Activated CD4-positive, alpha-beta memory T cell treated with anti-CD3 and anti-CD28 coated beads for 36 hours (primary cell): ENCODE measurements at regions of chr2 and their contacts with region 1.

Region 1: DNA sequence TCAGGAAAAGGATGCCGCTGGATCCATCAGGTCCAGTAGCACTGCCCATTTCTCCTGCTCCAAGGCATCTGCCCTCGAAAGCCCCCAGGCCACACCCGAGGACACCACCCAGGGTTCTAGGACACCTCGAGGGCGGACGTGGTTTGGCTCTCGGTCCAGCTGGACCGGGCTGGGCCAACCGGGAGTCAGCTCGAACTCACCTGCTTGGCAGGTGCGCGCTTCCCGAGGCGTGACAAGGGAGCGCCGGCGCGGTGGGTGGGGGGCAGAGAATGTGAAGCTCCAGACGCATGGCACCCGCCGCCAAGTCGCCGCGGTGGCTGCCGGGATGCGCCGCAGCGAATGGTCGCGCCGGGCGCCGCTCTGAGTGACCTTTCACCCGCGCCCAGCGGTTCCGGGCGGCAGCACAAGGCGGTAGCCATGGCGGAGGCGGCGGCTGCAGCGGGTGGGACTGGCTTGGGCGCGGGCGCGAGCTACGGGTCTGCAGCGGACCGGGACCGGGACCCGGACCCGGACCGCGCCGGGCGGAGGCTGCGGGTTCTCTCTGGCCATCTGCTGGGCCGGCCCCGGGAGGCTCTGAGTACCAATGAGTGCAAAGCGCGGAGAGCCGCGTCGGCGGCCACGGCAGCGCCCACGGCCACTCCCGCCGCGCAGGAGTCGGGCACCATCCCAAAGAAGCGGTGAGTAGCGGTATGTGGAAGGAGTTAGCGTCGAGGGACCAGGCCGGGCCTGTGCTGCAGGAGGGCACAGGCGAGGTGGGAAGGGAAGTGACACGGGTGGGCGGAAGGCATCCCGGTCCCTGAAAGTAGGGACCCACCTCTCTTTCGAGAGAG is at the start of gene AGPS:
- DNase-seq: peak; percentile 88
- H3K4me3 Mint-ChIP-seq: peak within 1 kb of the TSS; percentile 87
- H3K27ac Mint-ChIP-seq: peak within 1 kb of the TSS; percentile 70
- H3K4me1 Mint-ChIP-seq: peaks cover 56% of the 10 kb centered on the region
- H3K27me3 Mint-ChIP-seq: no peaks in the 10 kb centered on the region
- total RNA-seq, gene AGPS: 51.9 to 53.0 TPM

Region 2: DNA sequence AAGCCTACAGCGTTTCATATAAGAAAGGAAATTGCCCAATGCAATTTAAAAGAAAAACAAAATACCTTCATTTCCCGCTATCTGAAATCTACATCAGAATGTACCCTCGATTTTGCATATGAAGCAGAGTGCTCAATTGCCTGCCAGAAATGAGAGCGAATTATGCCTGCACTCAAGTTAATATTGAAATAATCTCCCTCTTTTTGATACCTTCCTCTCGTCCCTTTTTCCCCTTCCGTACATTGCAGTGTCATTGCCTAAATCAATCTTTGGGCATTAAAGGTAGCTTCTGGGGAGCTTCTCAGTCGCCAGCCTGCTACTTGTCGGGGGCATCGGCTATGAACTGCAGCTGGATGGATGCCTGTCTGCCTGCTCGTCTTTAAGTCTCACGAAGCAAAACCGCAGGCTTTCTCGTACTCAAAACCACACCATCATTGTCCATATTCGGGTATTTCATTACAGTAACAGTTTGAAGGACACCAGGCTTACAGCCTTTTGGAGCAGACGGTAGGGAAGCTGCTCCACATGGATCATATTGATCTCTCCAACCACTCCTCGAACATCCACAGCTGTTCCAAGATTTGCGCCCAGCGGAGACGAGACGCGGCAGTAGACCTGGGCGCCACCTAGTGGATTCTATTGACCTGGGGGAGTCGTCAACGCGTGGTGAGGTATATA is 244.0 kb before region 1 on chr2:
- CTCF ChIA-PET with region 1: interaction called, 13 read pairs
- POLR2A ChIA-PET with region 1: no interaction called
- intact Hi-C with region 1: no loop called
- DNase-seq: peak; percentile 81
- H3K4me3 Mint-ChIP-seq: peak overlapping the region; percentile 78
- H3K27ac Mint-ChIP-seq: no peak overlapping the region
- H3K4me1 Mint-ChIP-seq: peaks cover 12% of the 10 kb centered on the region
- H3K27me3 Mint-ChIP-seq: peaks cover 20% of the 10 kb centered on the region

Region 3: DNA sequence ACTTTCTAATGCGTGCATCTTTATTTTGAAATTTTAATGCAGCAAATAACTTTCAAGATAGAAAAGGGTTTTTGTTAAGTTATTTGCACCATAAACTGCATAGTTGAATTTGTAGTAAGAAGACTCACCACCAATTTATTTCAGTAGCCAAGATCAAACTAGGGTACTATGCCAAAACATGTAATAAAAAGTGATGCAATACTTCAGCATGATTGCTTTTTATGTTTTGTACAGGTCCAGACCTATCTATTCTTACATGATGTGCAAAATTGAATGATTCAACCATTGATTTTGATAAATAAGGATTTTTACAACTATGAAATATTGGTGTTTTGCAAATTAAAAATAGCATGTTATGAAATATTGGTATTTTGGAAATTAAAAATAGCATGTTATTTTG is 26.7 kb after region 1 on chr2:
- CTCF ChIA-PET with region 1: interaction called, 13 read pairs
- POLR2A ChIA-PET with region 1: no interaction called
- intact Hi-C with region 1: loop called (anchors 1 kb)
- DNase-seq: no peak
- H3K4me3 Mint-ChIP-seq: no peak overlapping the region
- H3K27ac Mint-ChIP-seq: no peak overlapping the region
- H3K4me1 Mint-ChIP-seq: peaks cover 33% of the 10 kb centered on the region
- H3K27me3 Mint-ChIP-seq: no peaks in the 10 kb centered on the region

Region 4: DNA sequence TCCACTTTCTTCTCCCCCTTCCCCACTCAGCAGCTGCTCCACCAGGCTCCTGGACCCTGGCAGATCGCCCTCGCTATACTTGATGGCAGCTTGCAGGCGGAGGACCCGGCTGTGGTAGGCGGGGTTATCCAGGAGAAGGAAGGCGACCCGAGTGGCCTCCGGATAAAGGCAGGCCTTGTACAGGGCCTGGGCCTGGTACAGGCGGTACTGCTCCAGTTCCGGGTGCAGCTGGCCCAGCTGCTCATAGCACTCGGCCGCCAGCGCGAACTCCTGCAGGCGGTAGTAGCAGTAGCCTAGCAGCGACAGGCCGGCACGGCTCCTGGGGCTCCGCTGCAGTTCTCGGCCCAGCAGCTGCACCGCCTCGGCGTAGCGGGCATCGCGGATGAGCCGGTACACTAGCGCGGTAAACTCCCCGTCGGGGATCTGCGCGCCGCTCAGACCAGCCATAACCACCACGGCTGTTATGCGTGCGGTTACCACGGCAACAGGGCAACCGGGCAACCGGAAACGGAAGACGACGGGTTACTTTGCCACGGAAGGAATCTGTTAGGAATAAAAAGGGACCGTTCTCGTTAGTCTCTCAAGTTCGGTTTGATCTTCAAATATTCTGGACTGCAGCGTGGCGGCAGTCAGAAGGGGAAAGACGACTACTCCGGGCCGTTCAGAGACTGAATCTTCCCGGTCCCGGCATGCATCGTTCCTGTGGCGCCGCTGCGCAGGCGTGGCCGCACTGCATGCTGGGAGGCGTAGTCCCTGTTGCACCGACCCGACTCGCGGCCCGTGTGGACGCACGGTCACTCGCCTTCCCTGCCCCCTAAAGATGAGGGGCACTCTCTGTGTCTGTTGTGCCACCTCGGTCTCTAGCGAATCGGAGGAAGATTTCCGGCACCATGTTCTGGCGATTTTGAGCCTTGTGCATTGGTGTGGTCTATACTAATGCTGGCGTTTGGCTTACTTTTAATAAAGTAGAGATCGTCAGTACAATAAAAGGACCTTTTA is 226.0 kb after region 1 on chr2:
- CTCF ChIA-PET with region 1: no interaction called
- POLR2A ChIA-PET with region 1: no interaction called
- intact Hi-C with region 1: loop called (anchors 1 kb)
- DNase-seq: peak; percentile 94
- H3K4me3 Mint-ChIP-seq: peak overlapping the region; percentile 92
- H3K27ac Mint-ChIP-seq: peak overlapping the region; percentile 99
- H3K4me1 Mint-ChIP-seq: peaks cover 4% of the 10 kb centered on the region
- H3K27me3 Mint-ChIP-seq: peaks cover 4% of the 10 kb centered on the region